Upper lobe of right lung (tissue), 1 donor: ENCODE measurements at regions of chr19 and their contacts with region 1.

Region 1: GRCh38 chr19:57708641-57709361 is at the start of gene ZNF154:
- DNase-seq: peak; percentile 64
- ATAC-seq: peak; percentile 72
- H3K4me3 ChIP-seq: peak within 1 kb of the TSS; percentile 60
- H3K27ac ChIP-seq: peak within 1 kb of the TSS; percentile 81
- H3K4me1 ChIP-seq: no peaks in the 10 kb centered on the region
- H3K27me3 ChIP-seq: no peaks in the 10 kb centered on the region
- CTCF ChIP-seq: no peak
- total RNA-seq, gene ZNF154: 4.5 TPM

Region 2: DNA sequence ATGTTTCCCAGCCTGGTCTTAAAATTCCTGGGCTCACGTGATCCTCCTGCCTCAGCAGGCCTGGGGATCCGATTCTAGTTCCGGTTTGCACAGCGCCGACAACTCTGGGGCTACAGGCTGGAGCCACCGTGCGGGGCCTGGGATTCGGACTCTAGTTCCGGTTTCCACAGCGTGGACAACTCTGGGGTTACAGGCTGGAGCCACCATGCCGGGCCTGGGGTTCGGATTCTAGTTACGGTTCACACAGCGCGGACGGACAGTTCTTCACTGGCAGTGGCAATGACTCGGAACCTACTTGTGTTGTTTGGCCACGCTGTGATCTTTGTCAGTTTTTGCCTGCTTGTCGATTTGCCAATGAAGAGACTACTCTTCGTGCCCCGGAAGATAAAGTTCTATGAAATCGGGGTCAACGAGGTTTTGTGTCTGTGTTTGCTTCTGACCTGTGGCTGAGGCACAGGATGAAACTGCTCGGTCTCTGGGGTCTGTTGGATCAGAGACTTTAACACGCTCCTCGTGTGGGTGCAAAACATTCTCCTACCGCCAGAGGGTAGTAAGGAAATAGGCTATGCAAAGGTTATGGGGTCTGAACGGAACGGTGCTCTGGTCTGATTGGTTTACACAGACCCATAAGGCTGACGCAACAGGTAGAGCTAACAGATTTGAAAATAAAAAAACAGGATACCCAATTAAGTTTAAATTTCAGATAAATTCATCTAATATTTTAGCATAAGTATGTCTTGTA is 312.9 kb after region 1 on chr19:
- intact Hi-C with region 1: no loop called
- DNase-seq: no peak
- ATAC-seq: peak; percentile 85
- H3K4me3 ChIP-seq: no peak overlapping the region
- H3K27ac ChIP-seq: no peak overlapping the region
- H3K4me1 ChIP-seq: no peaks in the 10 kb centered on the region
- H3K27me3 ChIP-seq: no peaks in the 10 kb centered on the region
- CTCF ChIP-seq: peak; percentile 63

Region 3: DNA sequence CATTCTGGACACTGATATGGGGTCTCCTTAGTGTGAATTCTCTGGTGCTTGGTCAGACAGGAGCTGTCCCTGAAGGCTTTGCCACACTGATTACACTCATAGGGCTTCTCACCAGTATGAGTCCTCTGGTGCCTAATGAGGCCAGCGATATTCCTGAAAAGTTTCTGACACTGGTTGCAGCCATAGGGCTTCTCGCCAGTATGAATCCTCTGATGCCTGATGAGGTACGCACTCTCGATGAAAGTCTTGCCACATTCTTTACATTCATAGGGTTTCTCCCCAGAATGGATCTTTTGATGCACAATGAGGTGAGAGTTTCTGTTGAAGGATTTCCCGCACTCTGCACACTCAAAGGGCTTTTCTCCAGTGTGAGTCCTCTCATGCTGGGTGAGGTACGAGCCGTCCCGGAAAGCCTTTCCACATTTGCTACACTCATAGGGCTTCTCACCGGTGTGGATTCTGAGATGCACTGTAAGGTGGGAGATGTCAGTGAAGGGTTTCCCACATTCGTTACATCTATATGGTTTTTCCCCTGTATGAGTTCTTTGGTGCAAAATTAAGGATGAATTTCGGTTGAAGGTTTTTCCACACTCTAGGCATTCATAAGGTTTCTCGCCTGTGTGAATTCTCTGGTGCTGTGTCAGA is 419.4 kb after region 1 on chr19:
- intact Hi-C with region 1: loop called (anchors 10 kb)
- DNase-seq: no peak
- ATAC-seq: no peak
- H3K4me3 ChIP-seq: no peak overlapping the region
- H3K27ac ChIP-seq: no peak overlapping the region
- H3K4me1 ChIP-seq: no peaks in the 10 kb centered on the region
- H3K27me3 ChIP-seq: no peaks in the 10 kb centered on the region
- CTCF ChIP-seq: no peak